ENCODE measurements at regions of chr12 and their contacts with region 1.

Region 1: DNA sequence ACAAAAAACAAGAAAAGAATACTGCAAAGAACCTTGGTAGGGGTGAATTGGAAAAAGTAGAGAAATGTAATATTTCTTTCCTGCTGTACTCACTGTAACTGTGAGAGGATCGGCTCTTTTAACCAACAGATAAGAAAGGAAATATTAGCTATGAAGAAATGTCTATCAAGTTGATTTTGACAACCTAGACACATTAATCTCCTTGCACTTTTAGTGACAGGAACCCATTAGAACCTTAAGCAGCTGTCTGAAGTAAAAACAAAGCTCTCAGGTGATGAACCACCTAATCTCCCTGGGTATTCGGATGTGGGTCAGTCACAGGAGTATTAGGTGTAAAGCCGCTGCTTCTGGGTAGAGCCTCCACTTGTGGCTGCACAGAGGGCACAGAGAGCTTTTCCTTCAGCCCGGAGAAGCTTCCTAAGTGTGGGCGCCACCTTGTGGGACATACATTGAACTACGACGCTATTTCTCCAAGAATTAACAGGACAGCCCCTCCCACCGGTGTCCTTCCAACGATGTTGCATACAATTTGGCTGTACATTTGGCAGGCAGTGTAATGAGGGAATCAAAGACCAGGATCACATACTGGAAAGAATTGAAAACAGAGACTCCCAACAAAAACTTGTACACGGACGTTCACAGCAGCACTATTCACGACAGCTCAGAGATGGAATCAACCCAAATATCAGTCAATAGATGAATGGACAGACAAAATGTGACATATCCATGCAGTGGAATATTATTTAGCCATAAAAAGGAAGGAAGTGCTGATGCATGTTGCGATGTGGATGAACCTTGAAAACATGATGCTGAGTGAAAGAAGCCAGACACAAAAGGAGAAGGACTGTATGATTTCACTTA is 28.9 kb upstream of the MAPKAPK5 start:
- DNase-seq: peak; percentile 26 to 85 (median 60)
- ATAC-seq: peak; percentile 100
- H3K4me3 ChIP-seq: no peak overlapping the region
- H3K4me3 Mint-ChIP-seq: no peak overlapping the region
- H3K27ac ChIP-seq: no peak overlapping the region
- H3K27ac Mint-ChIP-seq: no peak overlapping the region
- H3K4me1 ChIP-seq: peaks cover 6% of the 10 kb centered on the region
- H3K4me1 Mint-ChIP-seq: peaks cover 7% of the 10 kb centered on the region
- H3K27me3 ChIP-seq: no peaks in the 10 kb centered on the region
- H3K27me3 Mint-ChIP-seq: no peaks in the 10 kb centered on the region
- CTCF ChIP-seq: peak; percentile 81

Region 2: DNA sequence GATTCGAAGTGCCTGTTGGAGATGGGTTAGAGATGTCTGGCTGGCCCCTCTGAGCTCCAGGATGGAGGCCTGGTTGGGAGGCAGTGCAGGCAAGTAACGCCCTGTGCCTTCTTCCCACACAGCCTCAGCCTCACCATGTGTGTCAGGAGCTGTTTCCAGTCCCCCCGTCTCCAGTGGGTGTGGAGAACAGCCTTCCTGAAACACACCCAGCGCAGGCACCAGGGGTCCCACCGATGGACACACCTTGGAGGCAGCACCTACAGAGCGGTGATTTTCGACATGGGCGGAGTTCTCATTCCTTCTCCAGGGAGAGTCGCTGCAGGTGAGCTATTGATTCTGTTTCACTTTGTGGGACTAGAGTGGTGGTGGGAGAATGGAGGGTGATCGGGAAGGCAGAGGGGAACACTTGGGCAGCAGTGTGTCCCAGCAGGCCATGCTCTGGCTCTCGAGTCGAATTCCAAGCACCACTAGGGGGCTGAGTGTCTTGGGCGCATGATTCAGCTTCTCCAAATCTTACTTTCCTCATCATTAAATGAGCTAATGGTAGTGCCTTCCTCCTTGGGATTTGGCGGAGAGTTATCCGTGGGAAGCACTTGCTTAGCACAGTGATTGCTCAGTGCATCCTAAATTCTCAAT is 120.4 kb before region 1 on chr12:
- CTCF ChIA-PET with region 1: no interaction called
- POLR2A ChIA-PET with region 1: no interaction called
- intact Hi-C with region 1: loop called (anchors 2 to 10 kb)
- DNase-seq: no peak
- ATAC-seq: no peak
- H3K4me3 ChIP-seq: no peak overlapping the region
- H3K4me3 Mint-ChIP-seq: no peak overlapping the region
- H3K27ac ChIP-seq: no peak overlapping the region
- H3K27ac Mint-ChIP-seq: no peak overlapping the region
- H3K4me1 ChIP-seq: no peaks in the 10 kb centered on the region
- H3K4me1 Mint-ChIP-seq: peaks cover 4% of the 10 kb centered on the region
- H3K27me3 ChIP-seq: no peaks in the 10 kb centered on the region
- H3K27me3 Mint-ChIP-seq: no peaks in the 10 kb centered on the region
- CTCF ChIP-seq: no peak

Region 3: DNA sequence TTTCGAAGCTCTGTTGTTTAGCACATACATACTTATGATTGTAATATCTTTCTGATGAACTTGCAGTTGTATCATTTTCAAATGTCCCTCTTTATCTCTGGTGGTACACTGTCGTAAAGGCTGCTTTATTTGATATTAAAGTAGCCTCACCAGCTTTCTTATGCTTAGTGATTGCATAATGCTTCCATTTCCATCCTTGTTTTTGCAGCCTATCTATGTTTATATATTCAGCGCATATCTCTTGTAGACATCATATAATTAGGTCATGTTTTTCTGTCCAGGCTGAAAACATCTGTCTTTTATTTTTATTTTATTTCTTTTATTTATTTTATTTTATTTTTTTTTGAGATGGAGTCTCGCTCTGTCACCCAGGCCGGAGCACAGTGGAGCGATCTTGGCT is 92.7 kb before region 1 on chr12:
- CTCF ChIA-PET with region 1: no interaction called
- POLR2A ChIA-PET with region 1: no interaction called
- intact Hi-C with region 1: no loop called
- DNase-seq: no peak
- ATAC-seq: no peak
- H3K4me3 ChIP-seq: no peak overlapping the region
- H3K4me3 Mint-ChIP-seq: no peak overlapping the region
- H3K27ac ChIP-seq: no peak overlapping the region
- H3K27ac Mint-ChIP-seq: no peak overlapping the region
- H3K4me1 ChIP-seq: no peaks in the 10 kb centered on the region
- H3K4me1 Mint-ChIP-seq: no peaks in the 10 kb centered on the region
- H3K27me3 ChIP-seq: no peaks in the 10 kb centered on the region
- H3K27me3 Mint-ChIP-seq: no peaks in the 10 kb centered on the region
- CTCF ChIP-seq: no peak

Region 4: DNA sequence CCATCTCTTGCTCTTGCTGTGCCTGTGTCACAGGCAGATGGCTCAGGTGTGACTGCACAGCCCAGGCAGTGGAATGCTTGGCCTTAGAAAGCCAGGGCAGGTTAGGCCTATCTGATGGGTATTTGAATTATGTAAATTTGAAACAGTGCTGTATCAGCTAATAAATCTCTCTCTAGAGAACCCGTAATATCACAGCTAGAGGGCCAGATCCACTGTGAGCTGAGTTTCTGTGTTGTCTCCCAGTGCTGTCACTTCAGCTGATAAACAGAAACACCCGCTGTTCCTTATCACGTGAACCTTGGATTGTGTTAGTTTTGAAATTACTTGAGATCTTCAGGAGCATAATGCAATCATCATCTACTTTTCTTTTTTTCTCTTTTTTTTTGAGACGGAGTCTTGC is 67.9 kb before region 1 on chr12:
- CTCF ChIA-PET with region 1: interaction called, 10 read pairs
- POLR2A ChIA-PET with region 1: interaction called, 3 read pairs
- intact Hi-C with region 1: no loop called
- DNase-seq: no peak
- ATAC-seq: no peak
- H3K4me3 ChIP-seq: no peak overlapping the region
- H3K4me3 Mint-ChIP-seq: no peak overlapping the region
- H3K27ac ChIP-seq: no peak overlapping the region
- H3K27ac Mint-ChIP-seq: no peak overlapping the region
- H3K4me1 ChIP-seq: no peaks in the 10 kb centered on the region
- H3K4me1 Mint-ChIP-seq: no peaks in the 10 kb centered on the region
- H3K27me3 ChIP-seq: no peaks in the 10 kb centered on the region
- H3K27me3 Mint-ChIP-seq: no peaks in the 10 kb centered on the region
- CTCF ChIP-seq: no peak

Measured in CD8-positive, alpha-beta T cell (primary cell).